ENCODE measurements at regions of chr1 and their contacts with region 1.

Region 1: GRCh38 chr1:9588551-9589143 is at the start of gene TMEM201:
- DNase-seq: peak; percentile 97
- CTCF ChIP-seq: peak; percentile 82

Region 2: GRCh38 chr1:9399510-9400424 is 188.9 kb before region 1 on chr1:
- CTCF ChIA-PET with region 1: no interaction called
- POLR2A ChIA-PET with region 1: no interaction called
- DNase-seq: no peak
- CTCF ChIP-seq: no peak

Region 3: GRCh38 chr1:9573723-9574122 is 14.9 kb before region 1 on chr1:
- CTCF ChIA-PET with region 1: interaction called, 11 read pairs
- POLR2A ChIA-PET with region 1: no interaction called
- DNase-seq: peak; percentile 28
- CTCF ChIP-seq: no peak

Region 4: DNA sequence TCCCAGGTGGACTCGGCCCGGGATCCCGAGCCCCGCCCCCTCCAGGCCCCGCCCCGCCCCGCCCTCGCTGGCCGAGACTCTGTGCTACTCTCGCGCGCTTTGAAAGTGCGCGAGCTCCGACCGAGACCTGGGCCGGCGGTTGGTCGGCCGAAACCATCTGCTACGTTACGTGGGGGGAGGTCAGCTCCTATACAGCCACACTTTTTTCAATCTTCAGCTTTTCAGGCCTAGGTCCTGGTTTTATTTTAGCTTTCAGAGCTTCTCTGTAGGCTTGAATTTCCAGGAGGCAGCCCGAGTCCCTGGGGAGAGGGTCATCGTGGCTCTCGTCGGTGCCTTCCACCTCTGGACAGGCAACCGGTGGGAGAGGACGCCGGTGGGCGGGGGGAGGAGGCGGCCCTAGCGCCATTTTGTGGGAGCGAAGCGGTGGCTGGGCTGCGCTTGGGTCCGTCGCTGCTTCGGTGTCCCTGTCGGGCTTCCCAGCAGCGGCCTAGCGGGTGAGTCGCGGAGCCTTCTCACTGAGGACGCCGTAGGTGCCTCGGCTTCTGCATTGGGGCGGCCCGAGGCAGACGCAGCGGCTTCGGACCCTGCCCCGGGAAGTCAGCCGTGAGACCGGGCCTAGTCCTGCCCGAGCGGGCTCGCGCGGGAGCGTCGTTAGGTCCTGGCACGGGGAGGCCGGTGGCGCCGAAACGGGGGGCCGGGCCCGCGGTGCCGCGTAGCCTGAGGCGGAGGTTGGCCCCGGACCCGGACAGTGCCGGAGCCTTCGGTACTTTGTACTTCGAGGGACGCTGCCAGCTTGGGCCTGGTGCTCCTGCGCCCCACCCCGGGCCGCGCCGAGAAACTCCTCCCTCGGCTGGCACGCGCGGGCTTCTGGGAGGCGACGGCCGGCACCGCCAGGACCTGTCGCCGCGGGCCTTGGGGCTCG is 1423.9 kb after region 1 on chr1 and contains the start of gene TARDBP:
- CTCF ChIA-PET with region 1: no interaction called
- POLR2A ChIA-PET with region 1: no interaction called
- DNase-seq: peak; percentile 98
- CTCF ChIP-seq: no peak

Measured in GM10248 (cell line).